B cell (primary cell): ENCODE measurements at regions of chr12 and their contacts with region 1.

Region 1: DNA sequence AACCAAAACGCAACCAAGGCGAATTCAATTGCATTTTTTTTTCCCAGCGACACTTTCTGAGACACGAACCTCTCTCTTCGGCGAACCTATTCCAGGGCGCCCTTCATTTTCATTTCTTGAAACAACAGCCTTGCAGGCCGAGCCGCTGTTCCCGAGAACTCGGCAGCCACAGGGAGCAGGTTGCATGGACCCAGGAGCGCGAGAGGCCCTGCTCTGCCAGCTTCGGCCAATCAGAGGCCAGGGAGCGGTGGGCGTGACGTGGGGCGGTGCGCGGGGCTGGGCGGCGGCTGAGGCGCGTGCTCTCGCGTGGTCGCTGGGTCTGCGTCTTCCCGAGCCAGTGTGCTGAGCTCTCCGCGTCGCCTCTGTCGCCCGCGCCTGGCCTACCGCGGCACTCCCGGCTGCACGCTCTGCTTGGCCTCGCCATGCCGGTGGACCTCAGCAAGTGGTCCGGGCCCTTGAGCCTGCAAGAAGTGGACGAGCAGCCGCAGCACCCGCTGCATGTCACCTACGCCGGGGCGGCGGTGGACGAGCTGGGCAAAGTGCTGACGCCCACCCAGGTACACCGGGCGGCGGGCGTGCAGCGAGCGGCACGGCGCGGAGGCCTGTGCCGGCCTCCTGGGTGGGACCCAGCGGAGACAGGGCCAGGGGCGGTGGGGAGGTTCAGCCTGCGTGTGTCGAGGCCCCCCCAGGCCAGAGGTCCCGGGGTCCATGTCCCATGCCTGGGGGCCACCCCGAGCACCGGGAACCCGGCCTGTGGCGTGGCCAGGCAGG is at the start of gene PEBP1:
- DNase-seq: peak; percentile 91
- ATAC-seq: peak; percentile 100
- H3K4me3 ChIP-seq: peak within 1 kb of the TSS; percentile 66 to 91 (median 73)
- H3K4me3 Mint-ChIP-seq: peak within 1 kb of the TSS; percentile 99
- H3K27ac ChIP-seq: peak within 1 kb of the TSS; percentile 26 to 77
- H3K27ac Mint-ChIP-seq: peak within 1 kb of the TSS; percentile 92
- H3K4me1 ChIP-seq: peaks cover 6 to 19% of the 10 kb centered on the region in 2 donors
- H3K4me1 Mint-ChIP-seq: peaks cover 28% of the 10 kb centered on the region
- H3K27me3 ChIP-seq: no peaks in the 10 kb centered on the region
- H3K27me3 Mint-ChIP-seq: no peaks in the 10 kb centered on the region
- CTCF ChIP-seq: no peak
- total RNA-seq, gene PEBP1: 94.0 and 106 TPM in 2 replicates

Region 2: DNA sequence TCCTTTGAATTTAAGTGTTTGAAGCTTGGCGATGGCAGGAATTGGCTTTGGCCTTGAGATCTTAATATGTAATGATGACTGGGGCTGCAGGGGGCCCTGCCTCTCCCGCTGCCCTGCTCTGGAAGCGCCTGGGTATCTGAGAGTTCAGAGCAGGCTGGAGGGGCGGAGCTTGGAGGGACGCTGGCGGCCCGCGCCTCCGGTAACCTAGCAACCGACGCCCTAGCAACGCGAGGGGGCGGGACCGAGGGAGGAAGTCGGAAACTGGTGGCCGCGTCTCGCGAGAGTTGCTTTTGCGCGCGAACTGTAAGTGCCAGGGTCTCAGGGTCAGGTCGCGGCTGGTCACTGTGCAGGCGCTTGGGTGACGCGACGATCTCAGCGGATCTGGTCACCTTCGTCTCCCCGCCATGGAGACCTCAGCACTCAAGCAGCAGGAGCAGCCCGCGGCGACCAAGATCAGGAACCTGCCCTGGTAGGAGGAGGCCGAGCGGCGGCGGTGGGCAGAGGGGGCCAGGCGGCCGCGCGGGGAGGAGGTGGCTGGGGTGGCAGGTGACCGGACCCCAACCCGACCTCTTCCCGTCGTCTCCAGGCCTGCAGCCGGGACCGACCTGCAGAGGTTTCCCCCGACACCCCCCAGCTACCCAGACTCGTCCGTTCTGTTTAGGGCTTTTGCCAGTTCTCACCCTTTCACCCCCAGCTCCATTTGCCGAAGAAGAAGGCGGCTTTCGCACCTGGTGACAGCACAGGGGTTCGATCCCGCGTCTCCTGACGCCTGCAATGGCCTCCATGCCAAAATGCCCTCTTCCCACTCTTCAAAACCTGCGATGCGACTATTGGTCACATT is 119.3 kb before region 1 on chr12 and contains the start of gene RFC5:
- CTCF ChIA-PET with region 1: no interaction called
- POLR2A ChIA-PET with region 1: interaction called, 3 read pairs
- intact Hi-C with region 1: loop called (anchors 1 kb)
- DNase-seq: peak; percentile 98
- ATAC-seq: peak; percentile 98
- H3K4me3 ChIP-seq: peak within 1 kb of the TSS; percentile 51 to 92 (median 81)
- H3K4me3 Mint-ChIP-seq: peak within 1 kb of the TSS; percentile 91
- H3K27ac ChIP-seq: peak within 1 kb of the TSS in 1 of 2 donors; percentile 71
- H3K27ac Mint-ChIP-seq: peak within 1 kb of the TSS; percentile 95
- H3K4me1 ChIP-seq: peaks cover 11 to 16% of the 10 kb centered on the region in 2 donors
- H3K4me1 Mint-ChIP-seq: peaks cover 16% of the 10 kb centered on the region
- H3K27me3 ChIP-seq: no peaks in the 10 kb centered on the region
- H3K27me3 Mint-ChIP-seq: no peaks in the 10 kb centered on the region
- CTCF ChIP-seq: no peak
- total RNA-seq, gene RFC5: 15.0 and 22.7 TPM in 2 replicates

Region 3: DNA sequence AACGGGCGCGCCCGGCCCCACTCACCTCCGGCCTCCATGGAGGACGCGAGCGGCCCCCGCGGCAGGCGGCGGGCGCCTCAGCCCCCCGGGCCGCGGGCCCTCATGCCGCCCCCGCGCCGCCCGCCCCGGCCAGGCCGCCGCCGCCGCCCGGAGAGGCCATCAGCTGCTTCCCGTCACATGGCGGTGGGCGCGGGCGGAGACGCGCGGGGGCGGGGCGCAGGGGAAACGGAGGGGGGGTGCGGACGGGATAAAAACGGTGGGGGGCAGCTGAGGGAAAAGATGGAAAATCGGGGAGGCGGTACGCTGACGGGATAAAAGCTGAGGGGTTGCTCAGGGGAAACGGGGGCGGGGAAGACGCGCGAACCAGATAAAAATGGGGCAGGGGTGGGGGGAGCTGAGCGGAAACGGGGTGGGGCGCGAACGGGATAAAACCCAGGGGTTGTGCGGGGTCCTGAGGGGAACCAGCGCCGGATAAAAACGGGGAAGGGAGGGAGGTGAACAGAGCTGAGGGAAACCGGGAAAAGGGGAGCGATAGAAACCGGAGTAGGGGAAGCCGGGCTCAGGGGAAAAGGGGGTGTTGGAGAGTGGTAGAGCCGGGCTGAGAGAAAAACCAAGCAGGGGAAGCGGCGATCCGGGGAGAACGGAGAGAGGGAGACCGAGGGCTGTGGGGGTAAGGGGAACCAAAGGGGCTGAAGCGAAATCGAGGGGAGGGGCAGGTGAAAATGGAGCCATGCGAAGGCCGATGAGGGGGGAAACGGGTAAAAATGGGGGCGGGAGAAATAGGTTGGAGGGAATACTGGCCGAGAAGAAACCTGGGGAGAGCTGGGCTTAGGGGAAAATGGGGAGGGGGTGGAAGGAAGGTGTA is 74.7 kb before region 1 on chr12 and contains the start of gene WSB2:
- CTCF ChIA-PET with region 1: no interaction called
- POLR2A ChIA-PET with region 1: interaction called, 10 read pairs
- intact Hi-C with region 1: loop called (anchors 2 kb)
- DNase-seq: peak; percentile 55
- ATAC-seq: peak; percentile 63
- H3K4me3 ChIP-seq: peak within 1 kb of the TSS; percentile 58 to 92 (median 80)
- H3K4me3 Mint-ChIP-seq: peak within 1 kb of the TSS; percentile 92
- H3K27ac ChIP-seq: peak within 1 kb of the TSS; percentile 56 to 82
- H3K27ac Mint-ChIP-seq: peak within 1 kb of the TSS; percentile 88
- H3K4me1 ChIP-seq: peaks cover 31 to 39% of the 10 kb centered on the region in 2 donors
- H3K4me1 Mint-ChIP-seq: peaks cover 45% of the 10 kb centered on the region
- H3K27me3 ChIP-seq: no peaks in the 10 kb centered on the region
- H3K27me3 Mint-ChIP-seq: peaks cover 3% of the 10 kb centered on the region
- CTCF ChIP-seq: no peak
- total RNA-seq, gene WSB2: 21.4 and 26.8 TPM in 2 replicates

Region 4: GRCh38 chr12:118120579-118121363 is 15.2 kb before region 1 on chr12:
- CTCF ChIA-PET with region 1: interaction called, 28 read pairs
- POLR2A ChIA-PET with region 1: no interaction called
- intact Hi-C with region 1: loop called (anchors 1 kb)
- DNase-seq: peak; percentile 61
- ATAC-seq: peak; percentile 75
- H3K4me3 ChIP-seq: no peak overlapping the region
- H3K4me3 Mint-ChIP-seq: no peak overlapping the region
- H3K27ac ChIP-seq: no peak overlapping the region
- H3K27ac Mint-ChIP-seq: peak overlapping the region; percentile 26
- H3K4me1 ChIP-seq: no peaks in the 10 kb centered on the region
- H3K4me1 Mint-ChIP-seq: peaks cover 4% of the 10 kb centered on the region
- H3K27me3 ChIP-seq: no peaks in the 10 kb centered on the region
- H3K27me3 Mint-ChIP-seq: no peaks in the 10 kb centered on the region
- CTCF ChIP-seq: peak; percentile 88